Activated T-helper 1 cell treated with anti-CD3 and anti-CD28 coated beads, Interleukin-12 subunit alpha, Interleukin-12 subunit beta, Interleukin-2, Interleukin-4 antibody, amounts not matched to agents 30 ng/mL and 10 ng/mL and 1 ng/mL, durations not matched to agents 14 hours and 24 hours and 36 hours (primary cell): ENCODE measurements at regions of chr6 and their contacts with region 1.

Region 1: GRCh38 chr6:142819603-142820337 is 125.2 kb downstream of the HIVEP2 start:
- DNase-seq: peak; percentile 50
- H3K4me3 Mint-ChIP-seq: peak overlapping the region; percentile 85
- H3K27ac Mint-ChIP-seq: peak overlapping the region; percentile 98
- H3K4me1 Mint-ChIP-seq: peaks cover 75% of the 10 kb centered on the region
- H3K27me3 Mint-ChIP-seq: peaks cover 3% of the 10 kb centered on the region

Region 2: GRCh38 chr6:142773859-142774648 is 45.7 kb before region 1 on chr6:
- intact Hi-C with region 1: loop called (anchors 2 kb)
- DNase-seq: no peak
- H3K4me3 Mint-ChIP-seq: no peak overlapping the region
- H3K27ac Mint-ChIP-seq: peak overlapping the region; percentile 80
- H3K4me1 Mint-ChIP-seq: peaks cover 44% of the 10 kb centered on the region
- H3K27me3 Mint-ChIP-seq: no peaks in the 10 kb centered on the region

Region 3: GRCh38 chr6:142802124-142802523 is 17.6 kb before region 1 on chr6:
- intact Hi-C with region 1: loop called (anchors 1 kb)
- DNase-seq: no peak
- H3K4me3 Mint-ChIP-seq: peak overlapping the region; percentile 55
- H3K27ac Mint-ChIP-seq: peak overlapping the region; percentile 82
- H3K4me1 Mint-ChIP-seq: peaks cover 80% of the 10 kb centered on the region
- H3K27me3 Mint-ChIP-seq: no peaks in the 10 kb centered on the region

Region 4: DNA sequence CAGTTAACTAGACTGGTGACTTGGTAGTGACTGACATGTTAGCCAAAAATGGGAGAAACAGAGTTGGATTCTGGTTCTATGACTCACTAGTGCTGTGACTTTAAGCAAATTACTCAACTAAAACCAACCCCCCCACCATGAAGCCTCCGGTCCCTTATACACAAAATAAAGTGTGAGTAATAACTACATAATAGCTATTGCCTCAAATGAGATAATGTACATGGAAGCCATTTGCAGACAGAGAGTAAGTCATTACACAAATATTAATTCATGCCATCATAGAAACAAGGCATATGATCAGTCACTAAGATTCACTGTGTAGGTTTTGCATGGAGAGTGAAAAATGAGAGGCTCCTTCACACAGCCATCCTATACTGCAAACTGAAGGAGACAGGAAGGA is 13.3 kb after region 1 on chr6:
- intact Hi-C with region 1: loop called (anchors 1 kb)
- DNase-seq: no peak
- H3K4me3 Mint-ChIP-seq: no peak overlapping the region
- H3K27ac Mint-ChIP-seq: peak overlapping the region; percentile 62
- H3K4me1 Mint-ChIP-seq: peaks cover 44% of the 10 kb centered on the region
- H3K27me3 Mint-ChIP-seq: no peaks in the 10 kb centered on the region

Region 5: GRCh38 chr6:142857233-142857761 is 37.5 kb after region 1 on chr6:
- intact Hi-C with region 1: loop called (anchors 5 kb)
- DNase-seq: no peak
- H3K4me3 Mint-ChIP-seq: peak overlapping the region; percentile 80
- H3K27ac Mint-ChIP-seq: peak overlapping the region; percentile 95
- H3K4me1 Mint-ChIP-seq: peaks cover 81% of the 10 kb centered on the region
- H3K27me3 Mint-ChIP-seq: no peaks in the 10 kb centered on the region

Region 6: DNA sequence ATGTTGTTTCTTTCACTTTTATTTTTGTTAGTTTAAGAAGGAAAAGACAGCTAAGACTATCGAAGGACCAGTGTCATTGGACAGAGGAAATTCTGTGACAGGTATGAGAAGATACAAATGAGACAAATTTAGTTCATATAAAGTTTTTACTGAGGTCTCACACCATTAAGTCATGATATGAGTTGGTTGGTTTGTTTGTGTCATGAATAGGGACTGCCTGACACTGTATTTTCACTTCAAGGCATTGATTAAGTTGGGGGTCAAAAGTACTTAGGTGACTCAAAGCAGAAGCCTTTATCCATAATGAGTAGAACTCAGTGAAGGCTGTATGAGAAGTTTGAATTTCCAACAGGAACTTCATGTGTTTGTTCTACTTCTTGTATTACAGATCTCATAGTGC is 146.5 kb after region 1 on chr6:
- intact Hi-C with region 1: no loop called
- DNase-seq: no peak
- H3K4me3 Mint-ChIP-seq: no peak overlapping the region
- H3K27ac Mint-ChIP-seq: no peak overlapping the region
- H3K4me1 Mint-ChIP-seq: peaks cover 6% of the 10 kb centered on the region
- H3K27me3 Mint-ChIP-seq: no peaks in the 10 kb centered on the region

Region 7: GRCh38 chr6:143441680-143442545 is 622.1 kb after region 1 on chr6:
- intact Hi-C with region 1: loop called (anchors 1 kb)
- DNase-seq: peak; percentile 13
- H3K4me3 Mint-ChIP-seq: peak overlapping the region; percentile 53
- H3K27ac Mint-ChIP-seq: peak overlapping the region; percentile 91
- H3K4me1 Mint-ChIP-seq: peaks cover 61% of the 10 kb centered on the region
- H3K27me3 Mint-ChIP-seq: no peaks in the 10 kb centered on the region